Left lung (tissue), 14 donors: ENCODE measurements at regions of chr15 and their contacts with region 1.

Region 1: DNA sequence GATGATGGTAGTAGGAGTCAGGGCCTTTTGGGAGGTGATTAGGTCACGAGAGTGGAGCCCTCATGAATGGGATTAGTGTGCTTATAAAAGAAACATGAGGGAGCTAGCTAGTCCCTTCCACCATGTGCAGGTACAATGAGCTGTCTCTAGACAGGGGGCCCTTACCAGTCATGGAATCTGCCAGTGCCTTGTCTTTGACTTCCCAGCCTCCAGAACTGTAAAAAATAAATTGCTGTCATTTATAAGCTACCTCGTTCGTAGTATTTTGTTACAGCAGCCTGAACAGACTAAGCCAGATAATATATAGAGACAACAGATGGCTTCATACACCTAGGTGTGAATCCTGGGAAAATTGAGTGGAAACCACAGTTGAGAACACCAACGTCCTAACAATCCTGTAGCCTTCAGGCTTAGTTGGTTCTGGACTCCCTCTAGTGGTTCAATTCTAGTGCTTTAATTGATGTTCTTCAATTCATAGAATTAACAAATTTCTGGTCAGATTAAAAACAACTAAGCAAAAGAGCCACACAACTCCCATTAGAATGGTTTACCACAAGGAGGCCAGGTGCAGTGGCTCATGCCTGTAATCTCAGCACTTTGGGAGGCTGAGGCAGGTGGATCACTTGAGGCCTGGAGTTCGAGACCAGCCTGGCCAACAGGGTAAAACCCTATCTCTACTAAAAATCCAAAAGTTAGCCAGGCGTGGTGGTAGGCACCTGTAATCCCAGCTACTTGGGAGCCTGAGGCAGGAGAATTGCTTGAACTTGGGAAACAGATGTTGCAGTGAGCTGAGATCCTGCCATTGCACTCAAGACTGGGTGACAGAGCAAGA is 21.3 kb upstream of the GATM start:
- DNase-seq: peak in 2 of 4 donors; percentile 23 to 60
- ATAC-seq: no peak
- H3K4me3 ChIP-seq: no peak overlapping the region
- H3K27ac ChIP-seq: no peak overlapping the region
- H3K4me1 ChIP-seq: peaks cover 4 to 23% of the 10 kb centered on the region in 2 donors
- H3K27me3 ChIP-seq: no peaks in the 10 kb centered on the region
- CTCF ChIP-seq: peak; percentile 52 to 66

Region 2: DNA sequence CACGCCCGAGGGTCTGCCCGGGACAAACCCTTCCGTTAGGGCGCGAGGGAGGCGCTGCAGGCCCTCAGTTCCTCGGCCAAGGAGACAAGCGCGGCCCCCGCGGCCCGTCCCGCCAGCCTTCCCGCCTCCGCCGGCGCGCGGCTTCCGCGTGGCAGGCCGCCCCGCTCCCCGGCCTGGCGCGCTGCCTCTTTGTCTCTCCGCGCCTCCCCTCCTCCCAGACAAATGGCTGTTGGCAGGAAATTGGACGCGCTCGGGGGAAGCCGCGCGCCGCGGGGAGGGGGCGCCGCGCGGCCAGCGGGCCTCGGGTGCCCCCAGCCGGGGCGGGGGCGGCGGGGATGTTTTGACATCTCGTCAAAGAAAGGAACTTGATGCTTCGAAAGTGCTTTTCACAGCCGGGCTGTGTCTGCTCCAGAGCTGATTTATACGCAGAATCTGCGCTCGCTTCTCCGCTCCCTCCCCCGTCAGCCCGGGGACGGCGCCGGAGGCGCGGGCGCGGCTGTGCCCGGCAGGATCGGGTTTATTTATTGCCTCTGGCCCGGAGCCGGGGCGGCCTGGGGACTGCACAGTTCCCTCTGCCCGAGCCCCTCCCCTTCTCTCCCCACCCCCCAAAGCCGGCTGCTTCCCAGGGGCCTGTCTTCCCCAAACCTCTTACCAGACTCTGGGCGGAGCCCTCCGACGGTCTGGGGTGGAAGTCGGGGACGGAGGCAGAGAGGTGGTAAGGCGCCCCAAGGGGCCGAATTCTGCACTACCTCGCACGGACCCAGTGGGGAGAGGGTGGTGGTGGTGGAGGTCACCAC is 232.6 kb before region 1 on chr15:
- intact Hi-C with region 1: loop called in 1 of 2 experiments (anchors 10 kb)
- DNase-seq: peak; percentile 87 to 95 (median 92)
- ATAC-seq: peak; percentile 69
- H3K4me3 ChIP-seq: peak overlapping the region; percentile 59 to 62
- H3K27ac ChIP-seq: peak overlapping the region; percentile 95 to 97
- H3K4me1 ChIP-seq: peaks cover 15 to 29% of the 10 kb centered on the region in 2 donors
- H3K27me3 ChIP-seq: no peaks in the 10 kb centered on the region
- CTCF ChIP-seq: peak; percentile 21 to 76

Region 3: DNA sequence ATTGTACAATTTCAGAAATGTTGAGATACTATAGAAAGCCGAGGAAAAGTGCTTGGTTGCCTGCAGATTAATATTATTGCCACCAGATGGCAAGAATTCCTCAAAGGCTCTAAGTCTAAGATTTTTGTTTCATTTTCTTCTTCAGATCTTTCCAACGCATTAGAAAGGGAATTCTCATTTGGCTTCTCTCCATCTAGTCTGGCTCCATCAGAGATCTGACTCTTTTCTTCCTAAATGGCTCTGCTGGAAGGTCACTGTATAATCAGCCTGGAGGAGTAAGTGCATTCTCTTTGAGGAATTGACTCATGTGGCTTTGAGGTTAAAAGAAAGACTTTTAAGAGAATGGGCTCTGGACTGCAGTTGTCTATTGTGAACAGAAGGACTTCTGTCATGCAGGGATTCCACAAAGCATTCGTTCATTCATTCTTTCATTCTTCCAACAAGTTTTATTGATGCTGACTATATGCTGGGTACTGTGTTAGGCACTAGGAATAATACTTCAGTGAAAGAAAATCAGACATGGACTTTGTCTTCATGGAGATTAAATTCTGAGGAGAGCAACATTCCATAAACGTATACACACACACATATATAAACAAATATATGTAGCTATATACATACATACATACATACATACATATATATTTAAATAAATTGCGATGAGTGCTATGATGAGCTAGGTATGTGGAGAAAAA is 92.2 kb before region 1 on chr15:
- intact Hi-C with region 1: loop called in 1 of 2 experiments (anchors 5 kb)
- DNase-seq: peak in 2 of 4 donors; percentile 34 to 59
- ATAC-seq: peak; percentile 87
- H3K4me3 ChIP-seq: no peak overlapping the region
- H3K27ac ChIP-seq: no peak overlapping the region
- H3K4me1 ChIP-seq: peaks cover 0 to 5% of the 10 kb centered on the region in 2 donors
- H3K27me3 ChIP-seq: peaks cover 0 to 17% of the 10 kb centered on the region in 2 donors
- CTCF ChIP-seq: peak; percentile 52 to 58

Region 4: DNA sequence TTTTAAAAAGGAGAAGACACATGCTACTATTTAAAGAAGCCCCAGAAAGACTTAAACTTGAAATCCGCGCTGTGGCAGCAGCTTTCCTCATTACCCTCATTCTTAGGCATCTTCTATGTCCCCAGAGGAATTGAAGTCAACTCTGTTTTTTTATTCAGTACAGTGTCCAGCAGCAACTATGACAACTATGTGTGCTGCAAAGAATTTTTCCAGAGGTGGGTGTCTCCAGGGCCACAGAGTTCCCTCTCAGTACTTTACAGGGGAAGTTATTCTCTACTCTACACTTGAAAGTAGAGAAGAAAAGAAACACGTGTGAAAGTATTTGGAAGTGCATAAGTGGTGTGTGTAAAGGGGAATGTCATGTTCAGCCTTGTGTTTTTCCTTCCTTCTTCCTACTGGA is 53.2 kb before region 1 on chr15:
- intact Hi-C with region 1: no loop called
- DNase-seq: no peak
- ATAC-seq: peak; percentile 56
- H3K4me3 ChIP-seq: no peak overlapping the region
- H3K27ac ChIP-seq: peak overlapping the region in 1 of 2 donors; percentile 33
- H3K4me1 ChIP-seq: no peaks in the 10 kb centered on the region
- H3K27me3 ChIP-seq: peaks cover 0 to 6% of the 10 kb centered on the region in 2 donors
- CTCF ChIP-seq: no peak

Region 5: GRCh38 chr15:45670091-45670490 is 270.5 kb after region 1 on chr15:
- intact Hi-C with region 1: no loop called
- DNase-seq: peak in 1 of 4 donors; percentile 6
- ATAC-seq: no peak
- H3K4me3 ChIP-seq: no peak overlapping the region
- H3K27ac ChIP-seq: no peak overlapping the region
- H3K4me1 ChIP-seq: peaks cover 8 to 17% of the 10 kb centered on the region in 2 donors
- H3K27me3 ChIP-seq: no peaks in the 10 kb centered on the region
- CTCF ChIP-seq: no peak